Activated B cell treated with CpG ODN at 0.5 μM for 24 hours (primary cell): ENCODE measurements at regions of chr16 and their contacts with region 1.

Region 1: GRCh38 chr16:4846891-4847773 is at the starts of genes GLYR1 and UBN1:
- DNase-seq: peak; percentile 100
- ATAC-seq: peak; percentile 88
- H3K4me3 Mint-ChIP-seq: peak within 1 kb of the TSS; percentile 90
- H3K27ac Mint-ChIP-seq: peak within 1 kb of the TSS; percentile 92
- H3K4me1 Mint-ChIP-seq: peaks cover 51% of the 10 kb centered on the region
- H3K27me3 Mint-ChIP-seq: no peaks in the 10 kb centered on the region
- CTCF ChIP-seq: no peak
- total RNA-seq, gene GLYR1: 138 and 156 TPM in 2 replicates
- total RNA-seq, gene UBN1: 33.4 and 36.1 TPM in 2 replicates

Region 2: DNA sequence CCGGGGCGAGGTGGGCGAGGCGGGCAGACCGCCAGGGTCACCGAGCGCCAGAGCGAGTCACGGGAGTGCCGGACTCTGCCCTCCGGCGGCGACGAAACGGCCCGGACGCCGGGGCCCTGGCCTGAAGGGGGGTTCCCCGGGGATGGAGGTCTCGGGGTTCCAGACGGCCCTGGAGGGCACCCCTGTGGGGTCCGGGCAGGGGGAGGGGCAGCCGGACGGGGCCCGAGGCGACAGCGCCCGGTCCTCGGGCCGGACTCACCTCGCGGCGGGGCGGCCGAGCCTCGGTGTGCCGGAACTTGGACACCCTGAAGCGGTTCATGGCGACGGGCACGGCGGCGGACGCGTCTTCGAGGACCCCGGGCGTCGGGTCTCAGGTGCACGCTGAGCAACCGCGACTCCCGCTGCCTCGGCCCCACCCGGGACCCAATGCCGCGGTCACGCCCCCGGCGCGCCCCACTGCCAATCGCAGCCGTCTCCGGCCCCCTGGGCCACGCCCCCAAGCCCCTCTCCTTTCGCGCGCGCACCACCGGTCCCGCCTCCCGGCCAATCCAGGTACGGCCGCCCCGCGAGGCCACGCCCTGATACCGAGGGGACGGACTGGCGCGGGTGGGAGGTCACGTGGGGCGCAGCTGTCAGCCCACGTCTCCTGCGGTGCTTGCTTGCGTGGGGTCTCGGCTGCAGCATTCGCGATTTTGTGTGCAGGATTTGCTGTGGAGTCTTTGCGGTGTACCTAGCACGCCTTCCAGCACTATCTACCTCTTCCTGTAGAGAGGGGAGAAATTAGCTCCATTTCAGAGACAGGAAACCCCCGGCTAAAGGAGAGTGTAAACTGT is 430.7 kb before region 1 on chr16 and contains the start of gene CORO7:
- CTCF ChIA-PET with region 1: no interaction called
- POLR2A ChIA-PET with region 1: no interaction called
- intact Hi-C with region 1: loop called (anchors 5 kb)
- DNase-seq: peak; percentile 99
- ATAC-seq: peak; percentile 89
- H3K4me3 Mint-ChIP-seq: peak within 1 kb of the TSS; percentile 91
- H3K27ac Mint-ChIP-seq: peak within 1 kb of the TSS; percentile 95
- H3K4me1 Mint-ChIP-seq: peaks cover 36% of the 10 kb centered on the region
- H3K27me3 Mint-ChIP-seq: no peaks in the 10 kb centered on the region
- CTCF ChIP-seq: no peak
- total RNA-seq, gene CORO7: 74.6 and 86.6 TPM in 2 replicates

Region 3: GRCh38 chr16:4624015-4624826 is 222.9 kb before region 1 on chr16 and contains the start of gene MGRN1:
- CTCF ChIA-PET with region 1: no interaction called
- POLR2A ChIA-PET with region 1: no interaction called
- intact Hi-C with region 1: loop called (anchors 5 kb)
- DNase-seq: peak; percentile 86
- ATAC-seq: peak; percentile 90
- H3K4me3 Mint-ChIP-seq: peak within 1 kb of the TSS; percentile 99
- H3K27ac Mint-ChIP-seq: peak within 1 kb of the TSS; percentile 100
- H3K4me1 Mint-ChIP-seq: peaks cover 31% of the 10 kb centered on the region
- H3K27me3 Mint-ChIP-seq: no peaks in the 10 kb centered on the region
- CTCF ChIP-seq: peak; percentile 91
- total RNA-seq, gene MGRN1: 69.6 and 88.6 TPM in 2 replicates

Region 4: GRCh38 chr16:4660454-4661007 is 186.6 kb before region 1 on chr16:
- CTCF ChIA-PET with region 1: no interaction called
- POLR2A ChIA-PET with region 1: no interaction called
- intact Hi-C with region 1: no loop called
- DNase-seq: no peak
- ATAC-seq: no peak
- H3K4me3 Mint-ChIP-seq: no peak overlapping the region
- H3K27ac Mint-ChIP-seq: no peak overlapping the region
- H3K4me1 Mint-ChIP-seq: peaks cover 24% of the 10 kb centered on the region
- H3K27me3 Mint-ChIP-seq: no peaks in the 10 kb centered on the region
- CTCF ChIP-seq: no peak

Region 5: GRCh38 chr16:4734063-4734729 is 112.9 kb before region 1 on chr16 and contains the starts of genes ANKS3 and DNAAF8:
- CTCF ChIA-PET with region 1: interaction called, 4 read pairs
- POLR2A ChIA-PET with region 1: interaction called, 14 read pairs
- intact Hi-C with region 1: loop called (anchors 1 kb)
- DNase-seq: peak; percentile 84
- ATAC-seq: peak; percentile 77
- H3K4me3 Mint-ChIP-seq: peak within 1 kb of the TSS; percentile 90
- H3K27ac Mint-ChIP-seq: peak within 1 kb of the TSS; percentile 87
- H3K4me1 Mint-ChIP-seq: peaks cover 18% of the 10 kb centered on the region
- H3K27me3 Mint-ChIP-seq: no peaks in the 10 kb centered on the region
- CTCF ChIP-seq: no peak
- total RNA-seq, gene ANKS3: 17.9 and 21.9 TPM in 2 replicates
- total RNA-seq, gene DNAAF8: 0.29 and 0.31 TPM in 2 replicates

Region 6: GRCh38 chr16:4802659-4803287 is 44.4 kb before region 1 on chr16:
- CTCF ChIA-PET with region 1: no interaction called
- POLR2A ChIA-PET with region 1: interaction called, 15 read pairs
- intact Hi-C with region 1: loop called (anchors 1 kb)
- DNase-seq: peak; percentile 97
- ATAC-seq: peak; percentile 88
- H3K4me3 Mint-ChIP-seq: peak overlapping the region; percentile 86
- H3K27ac Mint-ChIP-seq: peak overlapping the region; percentile 69
- H3K4me1 Mint-ChIP-seq: peaks cover 25% of the 10 kb centered on the region
- H3K27me3 Mint-ChIP-seq: no peaks in the 10 kb centered on the region
- CTCF ChIP-seq: no peak

Region 7: GRCh38 chr16:4957720-4958509 is 110.8 kb after region 1 on chr16 and contains the start of gene SEC14L5:
- CTCF ChIA-PET with region 1: no interaction called
- POLR2A ChIA-PET with region 1: no interaction called
- intact Hi-C with region 1: loop called (anchors 2 kb)
- DNase-seq: peak; percentile 63
- ATAC-seq: peak; percentile 95
- H3K4me3 Mint-ChIP-seq: peak within 1 kb of the TSS; percentile 75
- H3K27ac Mint-ChIP-seq: no peak within 1 kb of the TSS
- H3K4me1 Mint-ChIP-seq: peaks cover 13% of the 10 kb centered on the region
- H3K27me3 Mint-ChIP-seq: peaks cover 54% of the 10 kb centered on the region
- CTCF ChIP-seq: no peak
- total RNA-seq, gene SEC14L5: not detected in 2 replicates